HepG2 (cell line): ENCODE measurements at regions of chr13 and their contacts with region 1.

Region 1: DNA sequence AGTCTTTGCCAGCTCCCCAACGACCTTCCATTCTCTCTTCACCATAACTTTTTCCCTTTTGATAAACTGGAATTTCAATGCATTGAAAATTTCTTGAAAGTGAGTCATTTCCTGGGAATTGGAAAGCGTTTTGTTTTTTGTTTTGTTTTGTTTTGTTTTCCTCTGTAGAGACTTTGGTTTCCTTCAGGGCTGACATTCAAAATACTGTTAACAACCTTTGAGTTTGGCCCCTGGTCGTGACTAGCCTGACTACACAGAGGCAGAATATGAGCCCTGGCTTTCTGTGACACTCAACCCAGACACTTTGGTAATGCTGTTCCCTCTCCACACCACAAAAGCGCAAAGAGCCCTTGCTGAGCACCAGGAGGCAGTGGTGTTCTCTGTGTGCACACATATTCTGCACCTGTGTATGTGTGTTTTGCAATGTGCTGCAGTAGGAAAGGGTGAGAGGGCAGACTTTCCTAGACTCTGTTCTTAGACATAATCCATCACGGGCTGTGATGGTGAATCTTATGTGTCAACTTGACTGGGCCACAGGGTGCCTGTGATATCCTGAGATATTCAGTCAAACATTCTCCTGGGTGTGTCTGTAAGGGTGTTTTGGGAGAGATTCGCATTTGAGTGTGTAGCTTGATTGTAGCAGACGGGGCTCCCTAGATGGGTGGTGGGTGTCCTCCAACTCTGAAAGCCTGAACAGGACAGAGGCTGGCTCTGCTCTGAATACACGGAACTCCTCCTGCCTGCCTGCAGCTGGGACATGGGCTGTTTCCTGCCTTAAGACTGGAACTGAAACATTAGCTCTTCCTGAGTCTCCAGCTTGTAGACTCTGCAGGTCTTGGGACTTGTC is 29.5 kb upstream of the ANKRD10 start:
- DNase-seq: peak; percentile 52
- ATAC-seq: peak; percentile 96
- H3K4me3 ChIP-seq: no peak overlapping the region
- H3K27ac ChIP-seq: no peak overlapping the region
- H3K4me1 ChIP-seq: no peaks in the 10 kb centered on the region
- H3K27me3 ChIP-seq: peaks cover 4 to 15% of the 10 kb centered on the region in 2 experiments; a peak in 2 of 5 replicates
- CTCF ChIP-seq: peak; percentile 85
- EP300 ChIP-seq: no peak
- POLR2A ChIP-seq: no peak
- RAD21 ChIP-seq: peak; percentile 71

Region 2: GRCh38 chr13:110984381-110984780 is 40.0 kb after region 1 on chr13:
- CTCF ChIA-PET with region 1: no interaction called
- POLR2A ChIA-PET with region 1: no interaction called
- in situ Hi-C with region 1: no loop called
- intact Hi-C with region 1: no loop called
- DNase-seq: no peak
- ATAC-seq: no peak
- H3K4me3 ChIP-seq: no peak overlapping the region
- H3K27ac ChIP-seq: no peak overlapping the region
- H3K4me1 ChIP-seq: peaks cover 10% of the 10 kb centered on the region
- H3K27me3 ChIP-seq: peaks cover 0 to 18% of the 10 kb centered on the region in 2 experiments; a peak in 3 of 5 replicates
- CTCF ChIP-seq: no peak
- EP300 ChIP-seq: no peak
- POLR2A ChIP-seq: no peak
- RAD21 ChIP-seq: no peak

Region 3: GRCh38 chr13:111031531-111031961 is 87.2 kb after region 1 on chr13:
- CTCF ChIA-PET with region 1: no interaction called
- POLR2A ChIA-PET with region 1: no interaction called
- in situ Hi-C with region 1: loop called (anchors 10 kb)
- intact Hi-C with region 1: no loop called
- DNase-seq: no peak
- ATAC-seq: no peak
- H3K4me3 ChIP-seq: no peak overlapping the region
- H3K27ac ChIP-seq: no peak overlapping the region
- H3K4me1 ChIP-seq: no peaks in the 10 kb centered on the region
- H3K27me3 ChIP-seq: peaks cover 10 to 68% of the 10 kb centered on the region in 2 experiments
- CTCF ChIP-seq: no peak
- EP300 ChIP-seq: no peak
- POLR2A ChIP-seq: no peak
- RAD21 ChIP-seq: no peak

Region 4: GRCh38 chr13:111049802-111050538 is 105.6 kb after region 1 on chr13:
- CTCF ChIA-PET with region 1: interaction called, 25 read pairs
- POLR2A ChIA-PET with region 1: no interaction called
- in situ Hi-C with region 1: no loop called
- intact Hi-C with region 1: loop called (anchors 1 kb)
- DNase-seq: no peak
- ATAC-seq: peak; percentile 62
- H3K4me3 ChIP-seq: no peak overlapping the region
- H3K27ac ChIP-seq: no peak overlapping the region
- H3K4me1 ChIP-seq: no peaks in the 10 kb centered on the region
- H3K27me3 ChIP-seq: peaks cover 2 to 3% of the 10 kb centered on the region in 2 experiments; a peak in 3 of 5 replicates
- CTCF ChIP-seq: peak; percentile 53
- EP300 ChIP-seq: no peak
- POLR2A ChIP-seq: no peak
- RAD21 ChIP-seq: peak; percentile 37; the same call in 1 of the 2 replicates

Region 5: DNA sequence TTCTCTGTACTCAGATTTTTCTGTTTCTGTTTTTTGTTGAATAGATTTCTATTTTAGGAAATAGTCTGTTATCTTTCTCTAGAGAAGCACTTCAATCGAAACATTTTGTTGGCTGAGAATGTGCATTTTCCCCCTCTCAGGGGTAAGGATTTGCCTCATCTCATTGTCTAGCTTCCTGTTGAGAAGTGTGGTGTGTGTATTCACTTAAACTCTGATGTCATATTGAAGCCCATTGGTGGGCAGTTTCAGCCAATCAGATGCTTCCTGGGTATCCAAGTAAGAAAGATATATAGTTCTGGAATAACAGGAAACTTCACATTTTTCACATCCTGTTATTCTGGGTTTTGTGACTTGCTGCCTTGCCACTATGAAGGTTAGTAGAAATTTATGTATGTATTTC is 258.4 kb after region 1 on chr13:
- CTCF ChIA-PET with region 1: no interaction called
- POLR2A ChIA-PET with region 1: no interaction called
- in situ Hi-C with region 1: loop called (anchors 25 kb)
- intact Hi-C with region 1: no loop called
- DNase-seq: no peak
- ATAC-seq: no peak
- H3K4me3 ChIP-seq: no peak overlapping the region
- H3K27ac ChIP-seq: no peak overlapping the region
- H3K4me1 ChIP-seq: peaks cover 13% of the 10 kb centered on the region
- H3K27me3 ChIP-seq: no peaks in the 10 kb centered on the region
- CTCF ChIP-seq: no peak
- EP300 ChIP-seq: no peak
- POLR2A ChIP-seq: no peak
- RAD21 ChIP-seq: no peak

Region 6: GRCh38 chr13:111216166-111216960 is 272.0 kb after region 1 on chr13:
- CTCF ChIA-PET with region 1: no interaction called
- POLR2A ChIA-PET with region 1: no interaction called
- in situ Hi-C with region 1: loop called (anchors 25 kb)
- intact Hi-C with region 1: loop called (anchors 10 kb)
- DNase-seq: peak; percentile 29
- ATAC-seq: peak; percentile 97
- H3K4me3 ChIP-seq: no peak overlapping the region
- H3K27ac ChIP-seq: no peak overlapping the region
- H3K4me1 ChIP-seq: no peaks in the 10 kb centered on the region
- H3K27me3 ChIP-seq: no peaks in the 10 kb centered on the region
- CTCF ChIP-seq: peak; percentile 81
- EP300 ChIP-seq: no peak
- POLR2A ChIP-seq: no peak
- RAD21 ChIP-seq: peak; percentile 58